GM12878 (cell line): ENCODE measurements at regions of chr1 and their contacts with region 1.

Region 1: GRCh38 chr1:67760030-67760821 is 73.0 kb downstream of the GNG12 start:
- DNase-seq: peak; percentile 90
- ATAC-seq: peak; percentile 98
- H3K4me3 ChIP-seq: no peak overlapping the region
- H3K27ac ChIP-seq: peak overlapping the region; percentile 84
- H3K4me1 ChIP-seq: peaks cover 15% of the 10 kb centered on the region
- H3K27me3 ChIP-seq: peaks cover 0 to 3% of the 10 kb centered on the region in 2 experiments; a peak in 2 of 4 replicates
- CTCF ChIP-seq: peak; percentile 70 to 84 (median 81); a peak in 5 of 6 replicates
- EP300 ChIP-seq: peak; percentile 96 to 99; a peak in 3 of 4 replicates
- POLR2A ChIP-seq: no peak
- RAD21 ChIP-seq: peak; percentile 85

Region 2: DNA sequence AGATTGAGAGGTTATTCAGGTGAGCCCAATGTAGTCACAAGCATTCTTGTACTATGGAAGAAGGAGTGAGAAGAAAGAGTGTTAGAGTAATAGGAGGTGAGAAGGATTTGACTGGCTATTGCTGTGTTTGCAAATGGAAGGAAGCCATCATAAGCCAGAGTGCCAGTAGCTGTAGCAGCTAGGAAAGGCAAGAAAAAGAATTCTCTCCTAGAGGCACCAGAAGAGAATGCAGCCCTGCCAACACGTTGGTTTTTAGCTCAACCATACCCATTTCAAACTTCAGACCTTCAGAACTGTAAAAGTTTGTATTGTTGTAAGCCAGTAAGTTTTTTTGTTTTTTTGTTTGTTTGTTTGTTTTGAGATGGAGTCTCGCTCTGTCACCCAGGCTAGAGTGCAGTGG is 461.5 kb before region 1 on chr1:
- CTCF ChIA-PET with region 1: no interaction called
- POLR2A ChIA-PET with region 1: no interaction called
- RAD21 ChIA-PET with region 1: no interaction called
- SMC1A ChIA-PET with region 1: no interaction called
- in situ Hi-C with region 1: no loop called
- intact Hi-C with region 1: no loop called
- DNase-seq: no peak
- ATAC-seq: peak; percentile 45; the same call in 2 of the 3 replicates
- H3K4me3 ChIP-seq: no peak overlapping the region
- H3K27ac ChIP-seq: no peak overlapping the region
- H3K4me1 ChIP-seq: no peaks in the 10 kb centered on the region
- H3K27me3 ChIP-seq: no peaks in the 10 kb centered on the region
- CTCF ChIP-seq: 0 out of 6 replicates have a peak, but pooled peaks of 1 of the 3 experiments have one; percentile 9
- EP300 ChIP-seq: no peak
- POLR2A ChIP-seq: no peak
- RAD21 ChIP-seq: no peak

Region 3: GRCh38 chr1:67535474-67535873 is 224.8 kb before region 1 on chr1:
- CTCF ChIA-PET with region 1: interaction called, 213 read pairs
- POLR2A ChIA-PET with region 1: interaction called, 5 read pairs
- RAD21 ChIA-PET with region 1: interaction called, 119 read pairs
- SMC1A ChIA-PET with region 1: interaction called, 138 read pairs
- in situ Hi-C with region 1: no loop called
- intact Hi-C with region 1: loop called (anchors 1 kb)
- DNase-seq: peak; percentile 9
- ATAC-seq: peak; percentile 90
- H3K4me3 ChIP-seq: no peak overlapping the region
- H3K27ac ChIP-seq: no peak overlapping the region
- H3K4me1 ChIP-seq: no peaks in the 10 kb centered on the region
- H3K27me3 ChIP-seq: no peaks in the 10 kb centered on the region
- CTCF ChIP-seq: peak; percentile 66 to 77 (median 75)
- EP300 ChIP-seq: no peak
- POLR2A ChIP-seq: no peak
- RAD21 ChIP-seq: peak; percentile 65

Region 4: DNA sequence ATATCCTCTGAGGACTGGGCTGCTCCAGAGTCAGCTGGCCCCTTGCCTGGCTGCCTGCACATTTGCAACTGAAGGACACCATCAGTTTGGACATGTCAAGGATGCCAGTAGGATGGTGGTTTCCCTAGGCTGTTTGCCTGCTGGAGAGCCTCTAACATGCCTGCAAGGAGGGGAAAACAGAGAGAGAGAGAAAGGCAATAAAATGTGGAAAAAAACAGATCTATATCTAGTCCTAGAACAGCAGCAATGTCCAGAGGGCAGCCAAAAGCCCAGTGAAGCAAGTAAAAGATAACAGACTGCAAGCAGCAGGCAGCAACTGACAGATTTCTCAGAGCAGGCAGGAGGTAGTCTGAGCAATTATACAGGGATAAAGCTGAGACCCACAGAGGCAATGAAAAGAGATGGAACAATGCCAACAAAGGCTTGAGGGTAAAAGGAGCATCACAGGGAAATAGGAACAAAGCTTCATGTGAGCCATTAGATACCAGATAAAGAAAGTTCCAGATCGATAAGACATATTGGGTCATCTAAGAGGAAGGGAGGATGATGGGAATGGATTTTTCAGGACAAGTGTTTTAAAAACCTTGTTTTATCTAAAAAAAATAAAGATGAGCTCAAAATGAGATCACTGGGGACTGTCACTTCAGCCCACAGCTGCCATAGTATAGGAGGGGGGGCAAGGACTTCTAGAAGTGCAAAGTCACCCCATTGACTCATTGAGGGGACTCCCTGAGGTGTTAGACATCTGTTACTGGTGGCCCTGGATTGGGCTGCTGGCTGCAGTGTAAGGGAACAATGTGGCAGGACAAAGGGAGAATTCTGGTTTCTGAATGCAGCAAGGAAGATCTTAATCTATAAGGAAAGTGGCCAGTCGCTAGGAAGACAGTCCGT is 113.8 kb before region 1 on chr1:
- CTCF ChIA-PET with region 1: interaction called, 11 read pairs
- POLR2A ChIA-PET with region 1: no interaction called
- RAD21 ChIA-PET with region 1: interaction called, 11 read pairs
- SMC1A ChIA-PET with region 1: interaction called, 10 read pairs
- in situ Hi-C with region 1: no loop called
- intact Hi-C with region 1: no loop called
- DNase-seq: no peak
- ATAC-seq: peak; percentile 33; the same call in 1 of the 3 replicates
- H3K4me3 ChIP-seq: no peak overlapping the region
- H3K27ac ChIP-seq: no peak overlapping the region
- H3K4me1 ChIP-seq: no peaks in the 10 kb centered on the region
- H3K27me3 ChIP-seq: no peaks in the 10 kb centered on the region; a peak in 1 of 4 replicates
- CTCF ChIP-seq: no peak
- EP300 ChIP-seq: no peak
- POLR2A ChIP-seq: no peak
- RAD21 ChIP-seq: no peak

Region 5: GRCh38 chr1:67704351-67704750 is 55.9 kb before region 1 on chr1:
- CTCF ChIA-PET with region 1: interaction called, 7 read pairs
- POLR2A ChIA-PET with region 1: no interaction called
- RAD21 ChIA-PET with region 1: interaction called, 11 read pairs
- SMC1A ChIA-PET with region 1: interaction called, 9 read pairs
- in situ Hi-C with region 1: no loop called
- intact Hi-C with region 1: no loop called
- DNase-seq: no peak
- ATAC-seq: no peak
- H3K4me3 ChIP-seq: no peak overlapping the region
- H3K27ac ChIP-seq: no peak overlapping the region
- H3K4me1 ChIP-seq: no peaks in the 10 kb centered on the region
- H3K27me3 ChIP-seq: no peaks in the 10 kb centered on the region; a peak in 2 of 4 replicates
- CTCF ChIP-seq: no peak
- EP300 ChIP-seq: no peak
- POLR2A ChIP-seq: no peak
- RAD21 ChIP-seq: no peak

Region 6: DNA sequence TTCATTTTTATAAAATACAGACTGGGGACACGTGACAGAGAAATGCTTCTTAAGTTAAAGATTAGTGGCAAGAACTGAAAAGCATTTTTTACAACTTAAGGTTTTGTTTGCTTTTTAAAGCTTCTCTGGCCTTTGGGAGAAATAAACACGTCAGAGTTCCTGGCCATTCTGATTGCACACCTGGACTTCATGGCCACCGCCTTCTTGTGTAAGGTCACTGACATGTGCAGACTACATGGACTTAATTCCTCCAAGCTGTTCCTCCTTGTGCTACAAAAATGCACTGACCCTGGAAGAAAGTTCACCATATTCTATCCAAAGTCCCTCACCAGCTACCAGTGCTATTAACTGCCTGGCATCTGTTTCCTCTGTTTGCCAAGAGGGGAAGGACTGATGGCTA is 19.1 kb before region 1 on chr1:
- CTCF ChIA-PET with region 1: interaction called, 36 read pairs
- POLR2A ChIA-PET with region 1: interaction called, 5 read pairs
- RAD21 ChIA-PET with region 1: interaction called, 14 read pairs
- SMC1A ChIA-PET with region 1: interaction called, 227 read pairs
- in situ Hi-C with region 1: no loop called
- intact Hi-C with region 1: loop called (anchors 2 kb)
- DNase-seq: no peak
- ATAC-seq: no peak
- H3K4me3 ChIP-seq: no peak overlapping the region
- H3K27ac ChIP-seq: no peak overlapping the region
- H3K4me1 ChIP-seq: peaks cover 8% of the 10 kb centered on the region
- H3K27me3 ChIP-seq: no peaks in the 10 kb centered on the region
- CTCF ChIP-seq: no peak
- EP300 ChIP-seq: no peak
- POLR2A ChIP-seq: no peak
- RAD21 ChIP-seq: no peak

Region 7: DNA sequence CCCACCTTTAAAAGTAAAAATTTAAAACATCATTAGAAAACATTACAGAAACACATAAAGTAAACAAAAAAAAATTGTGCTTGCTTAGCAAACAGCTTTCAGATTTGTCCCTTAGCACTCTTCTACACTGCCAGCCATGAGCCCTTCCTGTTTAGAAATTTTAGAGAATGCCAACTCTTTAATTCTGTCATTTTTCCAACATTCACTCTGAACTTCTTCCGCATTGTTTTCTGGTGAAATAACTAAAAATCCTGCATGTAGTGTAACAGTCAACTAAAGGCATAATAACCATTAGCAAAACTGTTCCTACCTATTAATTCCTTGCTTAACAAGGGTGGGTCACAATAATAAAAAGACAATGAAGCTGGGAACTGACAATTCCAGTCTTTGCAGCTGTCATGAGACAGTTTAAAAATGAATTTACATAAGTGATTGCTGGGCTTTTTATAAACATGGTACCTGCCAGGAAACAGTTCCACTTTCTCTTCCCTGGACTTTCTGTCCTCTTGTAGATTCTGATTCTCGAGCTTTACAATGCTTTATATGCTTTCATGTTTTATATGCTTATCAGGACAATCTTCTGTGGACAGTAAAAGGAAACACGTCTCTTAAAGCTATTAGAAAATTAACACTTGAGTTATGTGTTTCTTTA is 54.0 kb after region 1 on chr1:
- CTCF ChIA-PET with region 1: interaction called, 104 read pairs
- POLR2A ChIA-PET with region 1: interaction called, 35 read pairs
- RAD21 ChIA-PET with region 1: interaction called, 232 read pairs
- SMC1A ChIA-PET with region 1: interaction called, 1,058 read pairs
- in situ Hi-C with region 1: no loop called
- intact Hi-C with region 1: no loop called
- DNase-seq: no peak
- ATAC-seq: no peak
- H3K4me3 ChIP-seq: no peak overlapping the region
- H3K27ac ChIP-seq: no peak overlapping the region
- H3K4me1 ChIP-seq: no peaks in the 10 kb centered on the region
- H3K27me3 ChIP-seq: no peaks in the 10 kb centered on the region
- CTCF ChIP-seq: no peak
- EP300 ChIP-seq: no peak
- POLR2A ChIP-seq: no peak
- RAD21 ChIP-seq: no peak

Region 8: DNA sequence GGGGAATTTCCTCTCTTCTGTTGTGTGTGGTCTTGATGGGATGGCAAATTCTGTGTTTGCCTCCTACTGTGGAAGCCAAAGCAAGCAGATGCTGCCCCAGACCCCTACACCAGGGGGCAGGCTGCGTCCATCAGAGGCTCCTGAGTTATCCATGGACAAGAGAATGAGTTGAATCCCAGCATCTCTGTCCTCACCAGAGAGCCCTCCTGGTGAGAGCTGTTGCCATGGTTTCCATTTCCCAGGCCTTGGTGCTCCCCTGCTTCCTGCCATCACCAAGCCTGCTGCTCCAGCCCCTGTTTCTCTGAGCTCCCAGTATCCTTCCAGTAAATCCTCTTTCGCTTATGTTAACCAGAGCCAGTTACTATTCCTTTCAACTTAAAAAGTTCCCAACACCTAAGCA is 93.5 kb after region 1 on chr1:
- CTCF ChIA-PET with region 1: interaction called, 315 read pairs
- POLR2A ChIA-PET with region 1: no interaction called
- RAD21 ChIA-PET with region 1: interaction called, 175 read pairs
- SMC1A ChIA-PET with region 1: interaction called, 1,058 read pairs
- in situ Hi-C with region 1: no loop called
- intact Hi-C with region 1: no loop called
- DNase-seq: no peak
- ATAC-seq: peak; percentile 82
- H3K4me3 ChIP-seq: no peak overlapping the region
- H3K27ac ChIP-seq: no peak overlapping the region
- H3K4me1 ChIP-seq: no peaks in the 10 kb centered on the region
- H3K27me3 ChIP-seq: no peaks in the 10 kb centered on the region
- CTCF ChIP-seq: peak; percentile 51 to 72 (median 52)
- EP300 ChIP-seq: no peak
- POLR2A ChIP-seq: no peak
- RAD21 ChIP-seq: peak; percentile 41